Activated CD8-positive, alpha-beta memory T cell treated with anti-CD3 and anti-CD28 coated beads, Interleukin-2, amount 10 ng/mL, durations not matched to agents 7 days and 5 days (primary cell): ENCODE measurements at regions of chr6 and their contacts with region 1.

Region 1: DNA sequence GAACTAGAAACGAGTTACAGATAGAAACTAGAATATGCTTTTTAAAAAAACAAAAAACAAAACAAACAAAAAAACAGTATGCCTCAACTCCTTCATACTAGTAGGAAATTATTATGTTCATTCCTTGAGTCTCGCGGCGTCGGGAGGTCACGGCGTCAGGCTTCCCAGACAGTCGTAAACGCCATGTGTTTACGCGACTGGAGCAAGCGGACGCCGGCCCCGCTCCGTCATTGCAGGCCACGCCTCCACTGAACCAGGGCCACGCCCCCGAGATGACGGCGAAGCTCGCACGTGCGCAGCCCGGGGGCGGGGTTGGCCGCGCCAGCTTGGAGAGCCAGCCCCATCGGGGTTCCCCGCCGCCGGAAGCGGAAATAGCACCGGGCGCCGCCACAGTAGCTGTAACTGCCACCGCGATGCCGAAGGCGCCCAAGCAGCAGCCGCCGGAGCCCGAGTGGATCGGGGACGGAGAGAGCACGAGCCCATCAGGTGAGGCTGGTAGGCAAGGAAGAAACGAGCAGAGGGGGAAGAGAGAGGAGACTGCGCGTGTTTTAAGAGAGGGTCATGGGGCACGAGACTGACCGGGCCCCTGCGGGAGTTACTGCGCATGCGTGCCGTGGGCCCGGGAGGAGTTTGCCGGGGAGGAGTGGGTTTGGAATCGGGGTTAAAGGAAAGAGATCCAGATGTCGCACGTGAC is at the start of gene ABCF1:
- DNase-seq: peak; percentile 99
- ATAC-seq: peak; percentile 95
- H3K4me3 Mint-ChIP-seq: peak within 1 kb of the TSS; percentile 89
- H3K27ac Mint-ChIP-seq: peak within 1 kb of the TSS; percentile 94
- H3K4me1 Mint-ChIP-seq: peaks cover 58% of the 10 kb centered on the region
- H3K27me3 Mint-ChIP-seq: no peaks in the 10 kb centered on the region
- total RNA-seq, gene ABCF1: 73.8 to 98.6 TPM

Region 2: DNA sequence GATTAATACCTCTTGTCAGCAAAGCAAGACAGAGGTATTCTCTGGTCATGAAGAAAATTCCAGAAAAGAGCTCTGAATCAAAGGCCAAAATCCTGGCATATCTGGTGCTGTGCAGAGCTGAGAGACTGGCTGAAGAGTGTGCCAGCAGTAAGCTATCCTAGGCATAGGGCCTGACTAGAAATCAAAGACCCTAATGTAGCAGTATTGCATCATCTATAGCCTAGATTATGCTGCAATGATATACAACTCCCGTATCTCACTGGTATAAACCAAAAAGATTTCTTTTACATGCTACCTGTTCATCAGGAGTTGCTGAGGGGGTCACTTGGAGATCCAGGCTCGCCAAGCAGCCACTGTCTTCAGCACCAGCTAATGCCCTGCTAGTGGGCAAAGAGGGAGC is 275.4 kb before region 1 on chr6:
- CTCF ChIA-PET with region 1: no interaction called
- DNase-seq: no peak
- ATAC-seq: no peak
- H3K4me3 Mint-ChIP-seq: no peak overlapping the region
- H3K27ac Mint-ChIP-seq: no peak overlapping the region
- H3K4me1 Mint-ChIP-seq: no peaks in the 10 kb centered on the region
- H3K27me3 Mint-ChIP-seq: no peaks in the 10 kb centered on the region

Region 3: DNA sequence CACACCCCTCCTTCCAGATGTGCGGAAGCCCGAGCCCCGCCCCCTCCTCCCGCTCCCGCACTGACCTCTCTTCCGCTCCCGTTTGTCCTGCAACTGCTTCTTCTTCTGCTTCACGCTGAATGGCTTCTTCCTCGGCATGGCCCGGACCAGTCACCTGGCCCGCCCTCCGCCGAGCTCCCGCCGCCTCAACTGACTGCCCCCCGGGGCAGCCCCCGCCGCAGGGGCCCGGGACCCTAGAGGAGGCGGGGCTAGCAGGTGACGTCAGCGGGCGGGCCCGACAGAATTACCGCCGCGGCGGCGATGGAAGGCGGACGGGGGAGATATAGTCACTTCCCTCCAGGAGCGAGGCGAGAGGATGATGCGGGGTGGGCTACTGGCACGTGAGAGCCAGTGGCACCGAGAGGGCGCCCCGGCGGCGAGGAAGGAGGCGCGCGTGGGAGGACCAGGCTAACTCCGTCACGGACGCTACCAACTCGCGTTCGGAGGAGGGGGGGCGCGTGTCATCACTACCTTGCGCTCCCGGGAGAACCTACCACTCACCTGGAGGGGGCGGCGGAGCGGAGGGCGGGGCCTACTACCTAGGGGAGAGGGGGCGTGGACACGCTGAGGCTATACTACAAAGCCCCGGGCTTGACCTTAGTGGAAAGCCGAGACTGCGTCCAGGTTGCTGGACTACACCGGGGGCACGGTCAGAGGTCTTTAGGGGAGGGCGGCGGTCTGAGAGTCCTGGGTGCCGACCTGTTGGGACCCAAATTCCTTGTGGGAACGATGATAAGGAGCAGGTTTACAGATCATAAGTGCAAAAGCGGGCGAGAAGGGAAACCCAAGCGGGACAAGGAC is 14.9 kb before region 1 on chr6 and contains the start of gene GNL1:
- CTCF ChIA-PET with region 1: interaction called, 13 read pairs
- DNase-seq: peak; percentile 99
- ATAC-seq: peak; percentile 90
- H3K4me3 Mint-ChIP-seq: peak within 1 kb of the TSS; percentile 98
- H3K27ac Mint-ChIP-seq: peak within 1 kb of the TSS; percentile 100
- H3K4me1 Mint-ChIP-seq: peaks cover 34% of the 10 kb centered on the region
- H3K27me3 Mint-ChIP-seq: no peaks in the 10 kb centered on the region
- total RNA-seq, gene GNL1: 64.0 to 73.5 TPM